AG04449 (cell line): ENCODE measurements at regions of chr9 and their contacts with region 1.

Region 1: DNA sequence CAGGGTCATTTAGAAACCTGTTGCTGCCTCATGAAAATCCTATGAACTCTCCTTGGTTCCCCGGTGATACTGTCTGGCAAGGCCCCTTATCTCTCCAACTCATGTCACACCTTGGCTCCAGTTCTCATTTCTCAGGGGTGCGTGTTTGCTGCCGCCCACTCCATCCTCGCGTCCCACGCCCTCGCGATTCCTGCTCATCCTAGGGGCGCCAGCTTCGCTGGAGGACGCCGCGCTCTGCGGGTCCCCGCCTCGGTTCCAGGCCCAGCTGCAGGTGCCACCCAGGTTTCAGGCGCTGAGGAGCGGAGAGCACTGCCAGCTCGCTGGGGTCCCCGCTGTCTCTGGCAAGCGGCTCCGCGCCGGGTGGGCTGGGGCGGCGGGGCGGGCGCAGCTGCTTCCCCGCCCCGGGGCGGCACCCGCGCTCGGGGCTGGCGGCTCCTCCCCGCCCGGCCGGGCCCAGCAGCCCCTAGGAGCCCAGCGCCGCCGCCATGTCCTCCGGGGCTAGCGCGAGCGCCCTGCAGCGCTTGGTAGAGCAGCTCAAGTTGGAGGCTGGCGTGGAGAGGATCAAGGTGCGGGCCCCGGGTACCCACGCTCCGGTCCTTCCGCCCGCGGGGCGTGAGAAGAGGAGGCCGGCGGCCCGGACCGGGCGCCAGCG is at the start of gene GNG10:
- DNase-seq: no peak
- H3K4me3 ChIP-seq: peak within 1 kb of the TSS; percentile 83
- CTCF ChIP-seq: no peak

Region 2: DNA sequence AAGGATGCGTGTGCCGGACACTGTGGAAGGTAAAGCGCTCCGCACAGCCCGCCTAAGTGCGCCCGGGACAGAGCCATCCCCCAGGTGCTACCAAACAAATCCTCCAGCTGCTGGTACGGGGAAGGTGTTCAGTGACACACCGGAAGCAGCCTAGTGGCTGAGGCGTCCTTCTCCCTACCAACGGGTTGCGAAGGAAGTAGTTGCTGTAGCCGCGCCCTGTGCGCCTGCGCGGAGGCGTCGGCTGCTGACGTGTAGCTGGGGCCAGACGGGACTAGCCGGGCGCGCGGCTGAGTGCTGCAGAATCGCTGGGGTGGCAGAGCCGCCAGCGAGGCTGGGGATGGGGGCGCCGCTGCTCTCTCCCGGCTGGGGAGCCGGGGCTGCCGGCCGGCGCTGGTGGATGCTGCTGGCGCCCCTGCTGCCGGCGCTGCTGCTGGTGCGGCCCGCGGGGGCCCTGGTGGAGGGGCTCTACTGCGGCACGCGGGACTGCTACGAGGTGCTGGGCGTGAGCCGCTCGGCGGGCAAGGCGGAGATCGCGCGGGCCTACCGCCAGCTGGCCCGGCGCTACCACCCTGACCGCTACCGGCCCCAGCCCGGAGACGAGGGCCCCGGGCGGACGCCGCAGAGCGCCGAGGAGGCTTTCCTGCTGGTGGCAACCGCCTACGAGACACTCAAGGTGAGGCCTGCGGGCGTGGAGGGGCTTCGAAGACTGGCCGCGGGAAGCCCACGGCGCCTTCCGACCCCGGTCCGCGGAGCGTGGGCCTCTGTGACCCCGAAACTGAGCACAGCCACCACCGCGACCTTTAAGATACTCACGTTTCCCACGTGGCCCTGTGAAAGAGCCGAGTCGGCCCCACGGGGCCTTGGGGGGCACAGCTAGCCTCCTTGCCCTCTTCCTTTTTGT is 30.0 kb before region 1 on chr9 and contains the start of gene DNAJC25:
- CTCF ChIA-PET with region 1: no interaction called
- POLR2A ChIA-PET with region 1: interaction called, 13 read pairs
- DNase-seq: peak; percentile 94
- H3K4me3 ChIP-seq: peak within 1 kb of the TSS; percentile 93
- CTCF ChIP-seq: peak; percentile 6

Region 3: DNA sequence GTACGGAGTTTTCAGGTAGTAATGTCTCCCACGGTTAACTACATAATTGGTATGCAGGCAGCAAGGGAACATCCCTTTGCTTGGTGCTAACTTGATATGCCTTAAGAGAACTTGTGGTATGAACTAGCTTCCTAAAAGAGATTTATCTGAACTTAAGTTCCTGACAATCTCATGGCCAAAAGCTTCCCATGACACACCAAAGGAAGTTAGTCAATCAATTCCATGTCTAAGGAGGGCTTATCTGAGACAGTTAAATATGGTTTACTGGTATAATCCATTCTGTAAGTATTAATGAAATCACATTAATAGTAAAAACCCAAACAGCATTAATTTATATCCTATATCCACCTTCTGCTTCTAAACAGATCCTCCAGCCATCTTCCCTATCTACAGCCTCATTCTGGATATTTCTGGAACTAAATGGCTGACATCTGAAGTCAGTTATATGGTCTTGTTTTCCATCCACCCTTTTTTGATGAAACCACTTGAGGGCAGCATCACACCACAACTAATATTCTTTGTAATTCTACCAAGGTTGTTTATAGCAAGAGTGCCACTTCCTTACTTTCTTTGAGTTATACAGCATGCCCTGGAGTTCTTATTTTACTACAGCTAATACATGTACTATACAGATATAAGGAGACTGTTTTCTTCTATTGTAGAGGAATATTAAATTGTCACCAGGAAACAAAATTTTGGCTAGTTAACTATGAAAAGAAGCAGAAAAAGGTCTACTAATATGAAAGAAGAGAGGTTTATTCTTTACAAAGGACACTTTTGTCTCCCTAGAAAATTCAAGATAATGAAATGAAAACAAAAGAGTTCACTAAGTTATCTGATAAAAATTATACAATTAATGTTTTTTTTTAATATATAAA is 98.7 kb after region 1 on chr9:
- CTCF ChIA-PET with region 1: no interaction called
- POLR2A ChIA-PET with region 1: no interaction called
- DNase-seq: peak; percentile 65
- H3K4me3 ChIP-seq: no peak overlapping the region
- CTCF ChIP-seq: peak; percentile 47